Activated CD8-positive, alpha-beta T cell treated with anti-CD3 and anti-CD28 coated beads, Interleukin-2, amount 10 ng/mL, durations not matched to agents 7 days and 5 days (primary cell): ENCODE measurements at regions of chr1 and their contacts with region 1.

Region 1: DNA sequence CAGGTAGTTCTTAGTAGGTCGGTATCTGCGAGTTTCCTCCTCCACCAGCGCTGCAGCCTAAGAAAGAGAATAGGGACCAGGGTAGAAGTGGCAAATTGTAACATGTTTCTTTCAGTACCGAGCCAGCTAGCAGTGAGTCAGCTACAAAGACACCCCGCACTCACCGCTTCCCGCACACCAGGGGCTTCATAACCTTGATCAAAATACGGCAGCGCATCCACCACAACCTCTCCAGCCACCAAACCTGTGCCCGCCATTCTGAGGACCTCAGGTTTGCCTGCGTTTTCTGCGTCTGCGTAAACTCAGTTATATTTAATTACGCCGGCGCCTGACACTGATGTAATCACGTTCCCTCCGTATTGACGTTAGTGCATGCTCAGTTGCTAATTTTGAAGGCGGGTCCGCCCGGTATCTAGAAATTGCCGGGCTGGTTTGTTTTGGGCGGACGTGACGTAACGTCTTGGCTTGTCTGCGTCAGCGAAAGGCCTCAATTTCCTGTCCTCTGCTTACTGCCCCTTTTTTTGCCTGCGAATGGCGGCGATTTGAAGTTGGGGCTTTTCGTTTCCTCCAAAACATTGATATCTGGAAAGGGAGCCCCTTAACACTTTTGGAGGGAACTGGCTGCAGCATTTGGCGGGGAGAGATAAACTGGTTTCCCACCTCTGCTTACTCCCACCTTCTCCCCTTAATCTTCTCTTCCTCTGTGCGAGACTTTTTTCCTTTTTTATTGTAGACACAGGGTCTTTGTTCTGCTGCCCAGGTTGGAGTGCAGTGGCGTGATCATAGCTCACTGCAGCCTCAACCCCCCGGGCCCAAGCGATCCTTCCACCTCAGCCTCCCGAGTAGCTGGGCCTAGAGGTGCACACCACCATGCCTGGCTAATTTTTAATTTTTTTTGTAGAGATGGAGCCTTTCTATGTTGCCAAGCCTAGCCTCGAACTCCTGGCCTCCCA is at the start of gene BCAS2:
- DNase-seq: peak; percentile 98
- ATAC-seq: peak; percentile 98
- H3K4me3 Mint-ChIP-seq: peak within 1 kb of the TSS; percentile 94
- H3K27ac Mint-ChIP-seq: peak within 1 kb of the TSS; percentile 96
- H3K4me1 Mint-ChIP-seq: peaks cover 32% of the 10 kb centered on the region
- H3K27me3 Mint-ChIP-seq: no peaks in the 10 kb centered on the region
- total RNA-seq, gene BCAS2: 43.4 to 47.5 TPM

Region 2: GRCh38 chr1:114511032-114511785 is 70.4 kb before region 1 on chr1 and contains the start of gene TRIM33:
- CTCF ChIA-PET with region 1: interaction called, 3 read pairs
- POLR2A ChIA-PET with region 1: interaction called, 13 read pairs
- DNase-seq: peak; percentile 92
- ATAC-seq: peak; percentile 78
- H3K4me3 Mint-ChIP-seq: peak within 1 kb of the TSS; percentile 88
- H3K27ac Mint-ChIP-seq: peak within 1 kb of the TSS; percentile 93
- H3K4me1 Mint-ChIP-seq: peaks cover 43% of the 10 kb centered on the region
- H3K27me3 Mint-ChIP-seq: peaks cover 3% of the 10 kb centered on the region
- total RNA-seq, gene TRIM33: 39.5 to 43.4 TPM

Region 3: GRCh38 chr1:114610546-114611245 is 29.1 kb after region 1 on chr1:
- CTCF ChIA-PET with region 1: no interaction called
- POLR2A ChIA-PET with region 1: no interaction called
- DNase-seq: no peak
- ATAC-seq: no peak
- H3K4me3 Mint-ChIP-seq: no peak overlapping the region
- H3K27ac Mint-ChIP-seq: no peak overlapping the region
- H3K4me1 Mint-ChIP-seq: no peaks in the 10 kb centered on the region
- H3K27me3 Mint-ChIP-seq: no peaks in the 10 kb centered on the region

Region 4: GRCh38 chr1:114716304-114717170 is 134.9 kb after region 1 on chr1 and contains the start of gene NRAS:
- CTCF ChIA-PET with region 1: no interaction called
- POLR2A ChIA-PET with region 1: interaction called, 14 read pairs
- DNase-seq: peak; percentile 97
- ATAC-seq: peak; percentile 96
- H3K4me3 Mint-ChIP-seq: peak within 1 kb of the TSS; percentile 95
- H3K27ac Mint-ChIP-seq: peak within 1 kb of the TSS; percentile 99
- H3K4me1 Mint-ChIP-seq: peaks cover 23% of the 10 kb centered on the region
- H3K27me3 Mint-ChIP-seq: no peaks in the 10 kb centered on the region
- total RNA-seq, gene NRAS: 50.3 to 51.7 TPM